ENCODE measurements at regions of chr9 and their contacts with region 1.

Region 1: GRCh38 chr9:87310827-87311523 is 186.7 kb upstream of the DAPK1 start:
- DNase-seq: no peak
- H3K4me3 ChIP-seq: no peak overlapping the region
- H3K27ac ChIP-seq: no peak overlapping the region
- H3K4me1 ChIP-seq: no peaks in the 10 kb centered on the region
- H3K27me3 ChIP-seq: no peaks in the 10 kb centered on the region
- CTCF ChIP-seq: no peak
- EP300 ChIP-seq: no peak
- POLR2A ChIP-seq: no peak

Region 2: GRCh38 chr9:86486891-86487837 is 823.8 kb before region 1 on chr9:
- intact Hi-C with region 1: loop called (anchors 10 kb)
- DNase-seq: peak in 1 of 2 donors; percentile 82
- H3K4me3 ChIP-seq: no peak overlapping the region
- H3K27ac ChIP-seq: peak overlapping the region in 1 of 5 donors; percentile 18
- H3K4me1 ChIP-seq: peaks cover 0 to 5% (median 0%) of the 10 kb centered on the region in 4 donors
- H3K27me3 ChIP-seq: no peaks in the 10 kb centered on the region
- CTCF ChIP-seq: peak in 5 of 7 experiments; percentile 31 to 71 (median 60)
- EP300 ChIP-seq: no peak
- POLR2A ChIP-seq: no peak

Measured in stomach (tissue), 19 donors.